ENCODE measurements at regions of chr7 and their contacts with region 1.

Region 1: GRCh38 chr7:117127585-117128168 is 174.4 kb downstream of the ST7 start:
- DNase-seq: peak; percentile 48
- H3K4me3 Mint-ChIP-seq: no peak overlapping the region
- H3K27ac Mint-ChIP-seq: no peak overlapping the region
- H3K4me1 Mint-ChIP-seq: peaks cover 13% of the 10 kb centered on the region
- H3K27me3 Mint-ChIP-seq: no peaks in the 10 kb centered on the region

Region 2: GRCh38 chr7:116929914-116930913 is 197.5 kb before region 1 on chr7:
- CTCF ChIA-PET with region 1: interaction called, 77 read pairs
- POLR2A ChIA-PET with region 1: no interaction called
- intact Hi-C with region 1: loop called (anchors 1 kb)
- DNase-seq: peak; percentile 84
- H3K4me3 Mint-ChIP-seq: no peak overlapping the region
- H3K27ac Mint-ChIP-seq: no peak overlapping the region
- H3K4me1 Mint-ChIP-seq: peaks cover 4% of the 10 kb centered on the region
- H3K27me3 Mint-ChIP-seq: peaks cover 3% of the 10 kb centered on the region

Region 3: GRCh38 chr7:116953727-116954442 is 173.8 kb before region 1 on chr7:
- CTCF ChIA-PET with region 1: interaction called, 11 read pairs
- POLR2A ChIA-PET with region 1: no interaction called
- intact Hi-C with region 1: no loop called
- DNase-seq: peak; percentile 31
- H3K4me3 Mint-ChIP-seq: peak overlapping the region; percentile 92
- H3K27ac Mint-ChIP-seq: peak overlapping the region; percentile 87
- H3K4me1 Mint-ChIP-seq: peaks cover 24% of the 10 kb centered on the region
- H3K27me3 Mint-ChIP-seq: no peaks in the 10 kb centered on the region

Region 4: DNA sequence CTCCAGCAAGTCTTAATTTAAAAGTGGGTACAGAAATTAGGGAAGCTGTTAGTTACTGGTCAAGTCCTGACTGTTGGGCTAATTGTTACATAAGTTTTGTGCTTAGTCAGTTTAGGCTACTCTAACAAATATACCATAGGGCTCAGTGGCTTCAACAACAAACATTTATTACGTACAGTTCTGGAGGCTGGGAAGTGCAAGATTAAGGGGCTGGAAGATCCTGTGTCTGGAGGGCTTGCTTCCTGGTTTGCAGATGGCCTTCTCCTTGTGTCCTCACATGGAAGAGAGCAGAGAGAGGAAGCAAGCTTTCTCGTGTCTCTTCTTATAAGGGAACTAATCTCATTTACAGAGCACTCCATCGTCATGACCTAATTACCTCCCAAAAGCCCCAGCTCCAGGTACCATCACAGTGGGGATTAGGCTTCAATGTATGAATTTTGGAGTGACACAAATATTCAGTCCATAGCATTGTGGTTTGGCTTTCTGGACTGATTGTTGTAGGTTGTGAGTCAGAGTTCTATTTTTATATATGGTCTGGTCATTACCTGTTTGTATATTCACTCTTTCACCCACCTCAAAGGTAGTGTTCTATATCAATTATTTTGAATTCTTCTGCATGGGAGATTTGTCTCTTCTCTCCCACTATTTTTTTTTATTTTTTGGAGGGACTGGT is 157.3 kb before region 1 on chr7:
- CTCF ChIA-PET with region 1: interaction called, 14 read pairs
- POLR2A ChIA-PET with region 1: interaction called, 3 read pairs
- intact Hi-C with region 1: no loop called
- DNase-seq: no peak
- H3K4me3 Mint-ChIP-seq: no peak overlapping the region
- H3K27ac Mint-ChIP-seq: no peak overlapping the region
- H3K4me1 Mint-ChIP-seq: peaks cover 6% of the 10 kb centered on the region
- H3K27me3 Mint-ChIP-seq: no peaks in the 10 kb centered on the region

Region 5: DNA sequence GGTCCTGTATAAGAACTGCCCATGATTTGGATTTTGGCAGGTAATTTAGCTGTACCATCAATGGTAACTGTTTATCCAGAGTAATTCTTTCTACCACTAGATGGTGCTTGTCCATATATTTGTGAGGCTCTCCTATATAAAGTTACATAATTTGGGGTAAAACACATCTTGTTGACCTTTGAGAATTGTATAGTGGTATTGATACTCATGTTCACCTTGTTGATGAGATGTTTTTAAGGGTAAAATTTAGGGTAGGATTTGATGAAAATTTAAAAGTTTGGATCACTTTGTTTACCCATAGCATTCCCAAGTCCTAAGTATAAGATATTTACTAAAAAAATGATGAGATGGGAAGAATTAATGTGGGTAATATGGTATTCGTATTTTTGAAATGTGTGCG is 142.8 kb before region 1 on chr7:
- CTCF ChIA-PET with region 1: interaction called, 373 read pairs
- POLR2A ChIA-PET with region 1: no interaction called
- intact Hi-C with region 1: loop called (anchors 1 kb)
- DNase-seq: no peak
- H3K4me3 Mint-ChIP-seq: no peak overlapping the region
- H3K27ac Mint-ChIP-seq: no peak overlapping the region
- H3K4me1 Mint-ChIP-seq: peaks cover 4% of the 10 kb centered on the region
- H3K27me3 Mint-ChIP-seq: no peaks in the 10 kb centered on the region

Region 6: GRCh38 chr7:117072620-117073118 is 55.0 kb before region 1 on chr7:
- CTCF ChIA-PET with region 1: no interaction called
- POLR2A ChIA-PET with region 1: no interaction called
- intact Hi-C with region 1: no loop called
- DNase-seq: no peak
- H3K4me3 Mint-ChIP-seq: no peak overlapping the region
- H3K27ac Mint-ChIP-seq: no peak overlapping the region
- H3K4me1 Mint-ChIP-seq: peaks cover 7% of the 10 kb centered on the region
- H3K27me3 Mint-ChIP-seq: no peaks in the 10 kb centered on the region

Region 7: GRCh38 chr7:117110480-117111337 is 17.0 kb before region 1 on chr7:
- CTCF ChIA-PET with region 1: interaction called, 21 read pairs
- POLR2A ChIA-PET with region 1: no interaction called
- intact Hi-C with region 1: loop called (anchors 1 kb)
- DNase-seq: peak; percentile 69
- H3K4me3 Mint-ChIP-seq: no peak overlapping the region
- H3K27ac Mint-ChIP-seq: peak overlapping the region; percentile 33
- H3K4me1 Mint-ChIP-seq: peaks cover 29% of the 10 kb centered on the region
- H3K27me3 Mint-ChIP-seq: no peaks in the 10 kb centered on the region

Measured in activated CD4-positive, alpha-beta memory T cell treated with anti-CD3 and anti-CD28 coated beads for 36 hours (primary cell).